ENCODE measurements at regions of chr2 and their contacts with region 1.

Region 1: DNA sequence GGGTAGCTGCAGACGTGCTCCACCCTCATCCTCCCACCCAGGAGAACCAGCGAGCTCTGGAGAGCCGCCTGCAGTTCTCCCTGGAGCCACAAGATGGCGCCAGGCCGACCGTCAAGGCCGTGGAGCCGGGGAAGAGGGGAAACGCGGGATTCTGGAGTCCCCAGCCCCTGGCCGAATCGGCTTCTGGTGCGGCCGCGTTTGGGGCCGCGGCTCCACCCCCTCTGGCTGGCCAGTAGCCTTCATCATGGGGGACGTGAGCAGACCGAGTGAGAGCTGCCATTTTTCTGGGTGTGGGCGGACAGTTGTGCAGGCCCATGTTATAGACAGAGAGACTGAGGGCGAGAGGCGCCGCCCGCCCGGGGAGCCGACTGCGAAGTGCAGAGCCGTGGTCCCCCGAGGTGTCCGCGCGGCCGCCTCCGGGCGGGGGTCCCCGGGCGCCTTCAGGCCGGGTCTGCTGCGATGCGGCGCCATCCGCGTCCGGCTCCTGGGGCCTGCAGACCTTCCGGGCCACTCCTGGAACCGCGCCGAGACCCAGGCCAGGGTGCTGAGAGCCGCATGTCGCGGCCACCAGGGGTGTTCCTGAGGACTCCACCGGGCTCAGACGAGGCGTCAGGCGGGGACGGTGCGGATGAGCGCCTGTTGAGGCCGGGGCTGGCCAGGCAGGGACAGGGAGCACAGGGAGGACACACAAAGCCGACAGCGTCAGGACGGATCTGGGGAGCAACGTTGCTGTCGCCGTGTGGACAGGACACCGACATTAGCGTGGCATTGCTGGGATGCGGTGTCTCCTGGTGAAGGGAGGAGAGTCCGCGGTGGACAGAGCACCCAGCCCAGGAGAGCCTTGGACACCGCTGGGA is 418.2 kb upstream of the HS6ST1 start:
- DNase-seq: peak; percentile 80 to 93
- H3K4me3 ChIP-seq: peak overlapping the region; percentile 35 to 40 (median 38)
- H3K27ac ChIP-seq: no peak overlapping the region
- H3K4me1 ChIP-seq: peaks cover 11 to 27% (median 15%) of the 10 kb centered on the region in 4 donors
- H3K27me3 ChIP-seq: peaks cover 0 to 7% (median 0%) of the 10 kb centered on the region in 3 donors
- CTCF ChIP-seq: peak in 5 of 7 experiments; percentile 92 to 99 (median 98)
- EP300 ChIP-seq: no peak
- POLR2A ChIP-seq: no peak

Region 2: DNA sequence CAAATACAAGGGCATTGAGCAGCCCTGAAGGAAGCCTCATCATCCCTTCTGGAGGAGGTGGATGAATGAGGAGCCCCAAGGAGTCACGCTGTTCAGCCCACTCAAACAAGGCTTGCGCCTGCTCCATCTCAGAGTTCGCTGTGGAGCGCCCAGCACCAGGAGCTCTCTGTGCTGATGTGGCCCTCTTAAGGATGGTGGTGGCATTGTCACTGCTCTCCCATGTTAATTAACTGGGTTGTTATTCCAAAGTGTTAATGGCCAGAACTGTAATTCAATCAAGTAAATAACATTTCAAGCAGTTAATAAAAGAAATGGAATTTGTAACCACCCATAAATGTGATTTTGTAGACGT is 516.5 kb after region 1 on chr2:
- intact Hi-C with region 1: loop called (anchors 10 kb)
- DNase-seq: peak; percentile 49
- H3K4me3 ChIP-seq: no peak overlapping the region
- H3K27ac ChIP-seq: no peak overlapping the region
- H3K4me1 ChIP-seq: no peaks in the 10 kb centered on the region
- H3K27me3 ChIP-seq: no peaks in the 10 kb centered on the region
- CTCF ChIP-seq: peak in 5 of 7 experiments; percentile 21 to 56 (median 44)
- EP300 ChIP-seq: no peak
- POLR2A ChIP-seq: no peak

Measured in stomach (tissue), 19 donors.